Left cardiac atrium (tissue), 4 donors: ENCODE measurements at regions of chr3 and their contacts with region 1.

Region 1: DNA sequence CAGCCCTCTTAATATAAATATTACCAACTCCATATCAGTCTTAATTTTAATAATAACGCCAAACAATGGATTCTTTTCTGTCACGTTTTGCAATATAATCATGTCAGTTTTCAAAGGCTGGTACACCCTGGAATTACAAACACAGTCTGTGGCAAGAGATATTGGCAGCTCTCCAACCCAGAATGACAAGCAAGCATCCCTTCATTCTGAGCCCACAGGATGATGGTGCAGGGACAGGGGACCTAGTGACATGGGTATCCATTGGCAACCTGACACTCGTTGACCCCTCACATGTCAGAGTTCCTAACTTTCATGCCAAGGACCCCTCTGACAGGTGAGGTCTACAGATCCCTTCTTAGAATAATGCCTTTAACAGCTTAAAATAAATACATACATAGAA is 154.5 kb upstream of the TSC22D2 start:
- DNase-seq: no peak
- ATAC-seq: peak in 1 of 2 donors; percentile 39

Region 2: DNA sequence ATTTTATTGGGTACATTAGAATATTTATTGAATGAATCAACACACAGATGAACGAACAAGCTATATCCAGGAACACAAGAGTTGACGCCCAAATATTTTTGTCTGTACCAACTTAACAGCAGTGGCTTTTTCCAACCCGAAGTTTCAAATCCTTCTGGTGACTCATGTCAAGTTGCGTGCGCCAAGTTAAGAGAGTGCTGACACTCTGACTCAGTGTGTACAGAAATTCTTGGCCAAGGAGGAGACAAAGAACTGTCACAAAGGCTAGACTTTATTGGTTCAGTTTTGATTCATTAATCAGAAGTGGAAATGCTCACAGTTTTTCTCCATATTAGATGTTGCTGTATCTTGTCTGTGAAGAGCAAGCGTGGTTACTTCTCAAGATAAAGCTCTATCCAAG is 94.9 kb after region 1 on chr3:
- intact Hi-C with region 1: loop called in 1 of 2 experiments (anchors 10 kb)
- DNase-seq: no peak
- ATAC-seq: peak; percentile 81 to 88

Region 3: GRCh38 chr3:150451329-150452048 is 197.9 kb after region 1 on chr3:
- intact Hi-C with region 1: no loop called
- DNase-seq: no peak
- ATAC-seq: peak; percentile 53 to 66

Region 4: DNA sequence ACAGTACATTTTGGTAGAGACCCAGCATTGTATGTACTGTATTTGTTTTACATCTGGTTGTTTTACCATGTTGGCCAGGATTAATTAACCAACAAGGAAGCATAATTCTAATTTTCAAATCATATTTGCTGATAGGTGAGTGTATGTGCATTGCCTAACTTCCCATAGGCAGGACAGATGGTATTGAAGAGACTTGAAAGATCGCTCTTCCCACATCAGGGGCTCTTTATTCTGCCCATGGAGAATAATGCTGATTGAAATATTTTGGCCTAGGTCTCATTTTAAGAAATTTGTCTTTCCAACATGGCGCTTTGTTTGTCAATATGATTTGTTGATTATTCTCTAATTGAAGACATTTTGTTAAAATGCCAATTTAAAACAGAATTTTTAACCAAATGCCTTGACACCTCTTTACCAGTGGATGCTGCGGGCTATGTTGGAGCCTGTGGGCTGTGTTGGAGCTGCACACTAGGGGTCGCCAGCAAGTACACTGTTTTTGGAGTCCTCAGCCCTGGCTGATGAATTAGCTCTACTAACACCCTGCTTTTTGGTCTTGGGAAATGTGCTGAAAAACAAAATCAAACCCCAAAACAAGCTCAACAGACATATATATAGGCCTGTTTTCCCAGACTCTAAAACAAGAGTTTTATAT is 1125.6 kb after region 1 on chr3:
- intact Hi-C with region 1: no loop called
- DNase-seq: peak; percentile 27
- ATAC-seq: peak in 1 of 2 donors; percentile 68